ENCODE measurements at regions of chr17 and their contacts with region 1.

Region 1: DNA sequence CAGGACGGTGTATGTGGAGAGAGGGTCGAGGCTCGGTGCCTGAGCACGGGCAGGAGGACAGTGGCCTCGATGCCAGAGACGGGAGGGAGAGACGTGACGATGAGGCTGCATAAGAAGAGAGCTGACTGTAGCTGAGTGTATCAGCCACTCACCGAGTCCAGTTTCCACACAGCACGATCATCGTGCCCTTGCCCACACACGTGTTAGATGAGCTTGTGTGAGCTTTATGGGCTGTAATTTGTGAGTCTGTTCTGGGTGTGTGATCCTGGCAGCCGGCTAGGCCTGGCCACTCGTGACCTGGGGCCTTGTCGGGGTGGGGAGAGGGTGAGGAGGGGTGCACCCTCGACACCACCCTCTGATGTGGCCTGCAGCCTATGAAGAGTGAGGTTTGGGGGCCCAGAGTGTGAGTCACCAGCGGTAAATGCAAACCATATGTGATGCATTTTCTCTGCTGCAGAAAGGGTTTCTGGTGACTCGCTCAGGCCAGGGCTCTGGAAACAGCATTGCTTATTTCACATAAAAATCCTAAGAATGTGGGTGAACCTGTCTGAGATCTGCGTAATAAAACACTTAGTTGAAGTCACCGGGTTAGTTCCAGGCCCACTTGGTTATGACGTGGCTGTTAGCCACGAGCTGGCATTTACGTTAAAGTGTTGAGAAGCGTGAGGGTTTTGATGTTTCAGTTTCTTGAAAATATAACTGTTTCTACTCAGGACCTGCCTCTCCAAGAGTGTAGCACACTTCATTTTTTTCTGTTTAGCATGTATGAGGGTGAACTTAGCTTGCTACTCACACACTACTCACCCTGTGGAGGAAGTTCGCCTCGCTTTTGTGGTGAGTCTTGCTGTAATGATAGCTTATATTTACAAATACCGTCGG is 4.2 kb downstream of the METRNL start:
- DNase-seq: peak; percentile 80
- H3K4me3 Mint-ChIP-seq: peak overlapping the region; percentile 64
- H3K27ac Mint-ChIP-seq: peak overlapping the region; percentile 85
- H3K4me1 Mint-ChIP-seq: peaks cover 38% of the 10 kb centered on the region
- H3K27me3 Mint-ChIP-seq: no peaks in the 10 kb centered on the region

Region 2: GRCh38 chr17:82985973-82986372 is 97.6 kb before region 1 on chr17:
- intact Hi-C with region 1: loop called (anchors 5 kb)
- DNase-seq: peak; percentile 91
- H3K4me3 Mint-ChIP-seq: peak overlapping the region; percentile 81
- H3K27ac Mint-ChIP-seq: peak overlapping the region; percentile 78
- H3K4me1 Mint-ChIP-seq: peaks cover 25% of the 10 kb centered on the region
- H3K27me3 Mint-ChIP-seq: peaks cover 1% of the 10 kb centered on the region

Region 3: DNA sequence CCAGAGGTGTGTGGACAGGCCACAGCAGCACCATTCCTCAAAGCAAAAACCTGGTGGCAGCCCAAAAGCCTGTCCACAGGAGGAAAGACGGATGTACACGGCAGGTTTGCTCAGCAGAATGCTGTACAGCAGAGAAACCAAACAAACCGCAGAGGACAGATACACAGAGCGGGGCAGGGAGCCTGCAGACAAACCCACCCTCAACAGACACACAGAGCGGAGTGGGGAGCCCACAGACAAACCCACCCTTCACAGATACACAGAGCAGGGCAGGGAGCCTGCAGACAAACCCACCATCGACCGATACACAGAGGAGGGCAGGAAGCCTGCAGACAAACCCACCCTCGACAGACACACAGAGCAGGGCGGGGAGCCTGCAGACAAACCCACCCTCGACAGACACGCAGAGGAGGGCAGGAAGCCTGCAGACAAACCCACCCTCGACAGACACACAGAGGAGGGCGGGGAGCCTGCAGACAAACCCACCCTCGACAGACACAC is 57.2 kb before region 1 on chr17:
- intact Hi-C with region 1: no loop called
- DNase-seq: no peak
- H3K4me3 Mint-ChIP-seq: no peak overlapping the region
- H3K27ac Mint-ChIP-seq: no peak overlapping the region
- H3K4me1 Mint-ChIP-seq: peaks cover 12% of the 10 kb centered on the region
- H3K27me3 Mint-ChIP-seq: no peaks in the 10 kb centered on the region

Region 4: GRCh38 chr17:83096401-83097245 is 13.1 kb after region 1 on chr17:
- intact Hi-C with region 1: no loop called
- DNase-seq: no peak
- H3K4me3 Mint-ChIP-seq: no peak overlapping the region
- H3K27ac Mint-ChIP-seq: no peak overlapping the region
- H3K4me1 Mint-ChIP-seq: no peaks in the 10 kb centered on the region
- H3K27me3 Mint-ChIP-seq: peaks cover 8% of the 10 kb centered on the region

Region 5: DNA sequence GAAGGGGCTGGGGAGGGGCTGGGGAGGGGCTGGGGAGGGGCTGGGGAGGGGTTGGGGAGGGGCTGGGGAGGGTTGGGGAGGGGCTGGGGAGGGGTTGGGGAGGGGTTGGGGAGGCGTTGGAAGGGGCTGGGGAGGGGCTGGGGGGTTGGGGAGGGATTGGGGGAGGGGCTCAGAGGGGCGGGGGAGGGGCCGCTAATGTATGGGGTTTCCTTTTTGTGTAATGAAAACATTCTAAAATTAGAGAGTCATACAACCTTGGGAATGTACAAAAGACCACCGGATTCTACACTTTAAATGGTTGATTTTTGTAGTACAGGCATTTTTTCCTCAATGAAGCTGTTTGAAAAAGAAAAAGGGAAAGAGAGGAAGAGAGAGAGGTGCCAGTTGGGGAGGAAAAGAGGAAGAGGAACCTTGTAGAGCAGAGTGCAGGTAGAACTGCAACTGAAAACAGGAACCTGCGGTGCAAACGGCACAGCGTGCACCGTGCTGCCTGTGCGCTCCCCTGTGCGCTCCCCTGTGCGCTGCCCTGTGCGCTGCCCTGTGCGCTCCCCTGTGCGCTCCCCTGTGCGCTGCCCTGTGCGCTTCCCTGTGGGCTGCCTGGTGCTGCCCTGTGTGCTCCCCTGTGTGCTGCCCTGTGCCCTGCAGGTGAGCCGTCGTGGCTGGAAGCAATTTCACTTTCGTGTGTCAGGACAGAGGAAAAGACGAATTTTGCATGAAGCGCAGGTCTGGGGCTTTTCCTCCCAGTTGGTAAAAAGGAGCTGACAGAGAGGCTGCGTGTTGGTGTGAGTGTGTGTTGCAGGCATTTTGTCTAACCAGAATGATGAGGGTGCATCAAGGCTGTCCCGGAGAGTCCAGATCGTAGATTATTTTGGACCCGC is 36.7 kb after region 1 on chr17:
- intact Hi-C with region 1: no loop called
- DNase-seq: peak; percentile 69
- H3K4me3 Mint-ChIP-seq: peak overlapping the region; percentile 51
- H3K27ac Mint-ChIP-seq: no peak overlapping the region
- H3K4me1 Mint-ChIP-seq: peaks cover 13% of the 10 kb centered on the region
- H3K27me3 Mint-ChIP-seq: peaks cover 27% of the 10 kb centered on the region

Region 6: GRCh38 chr17:83133302-83134100 is 49.9 kb after region 1 on chr17:
- intact Hi-C with region 1: no loop called
- DNase-seq: no peak
- H3K4me3 Mint-ChIP-seq: no peak overlapping the region
- H3K27ac Mint-ChIP-seq: no peak overlapping the region
- H3K4me1 Mint-ChIP-seq: no peaks in the 10 kb centered on the region
- H3K27me3 Mint-ChIP-seq: peaks cover 4% of the 10 kb centered on the region